Keratinocyte (primary cell): ENCODE measurements at regions of chr17 and their contacts with region 1.

Region 1: DNA sequence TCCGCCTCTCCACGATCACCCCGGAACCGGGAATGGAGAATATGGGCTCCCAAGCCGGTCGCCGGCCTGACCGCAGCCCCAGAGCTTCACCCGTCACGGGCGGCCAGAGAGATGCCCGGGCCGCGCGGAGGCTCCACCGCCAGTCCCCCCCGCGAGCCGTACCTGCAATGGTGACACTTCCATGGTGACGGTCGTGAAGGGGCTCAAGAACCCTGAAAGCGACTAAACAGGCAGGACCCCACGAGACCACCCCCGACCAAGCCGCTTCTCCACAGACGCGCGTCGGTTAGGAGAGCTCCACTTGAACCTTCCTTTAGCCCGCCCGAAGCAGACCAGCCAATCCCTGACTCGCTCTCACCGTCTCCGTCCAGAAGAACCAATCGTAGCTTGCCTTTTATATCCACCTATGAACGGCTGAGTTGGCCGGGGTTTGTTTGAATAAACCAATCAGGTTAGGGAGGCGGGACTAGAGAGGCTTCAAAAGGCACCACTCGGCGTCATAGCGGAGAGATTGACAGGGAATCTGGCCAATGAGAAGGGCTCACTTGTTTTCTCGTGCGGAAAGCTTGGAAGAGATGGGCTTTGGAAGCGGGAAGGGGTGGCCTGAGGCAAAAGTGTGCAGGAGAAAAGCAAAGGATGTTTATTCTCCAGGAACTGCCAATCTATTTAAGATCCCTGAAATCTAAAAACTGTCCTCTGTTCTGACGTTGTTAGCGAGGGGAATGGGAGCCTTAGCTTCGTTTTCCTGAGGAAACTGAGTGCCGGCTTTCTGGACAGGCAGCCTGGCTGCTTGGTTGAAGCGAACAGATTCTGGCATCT is at the start of gene TOP2A:
- DNase-seq: peak; percentile 100
- H3K4me3 ChIP-seq: peak within 1 kb of the TSS; percentile 67 to 85 (median 84)
- H3K27ac ChIP-seq: peak within 1 kb of the TSS; percentile 67
- H3K4me1 ChIP-seq: peaks cover 16% of the 10 kb centered on the region
- H3K27me3 ChIP-seq: no peaks in the 10 kb centered on the region
- CTCF ChIP-seq: no peak
- polyA plus RNA-seq, gene TOP2A: 5.2 to 45.0 TPM (median 27.1 TPM) in 3 replicates

Region 2: DNA sequence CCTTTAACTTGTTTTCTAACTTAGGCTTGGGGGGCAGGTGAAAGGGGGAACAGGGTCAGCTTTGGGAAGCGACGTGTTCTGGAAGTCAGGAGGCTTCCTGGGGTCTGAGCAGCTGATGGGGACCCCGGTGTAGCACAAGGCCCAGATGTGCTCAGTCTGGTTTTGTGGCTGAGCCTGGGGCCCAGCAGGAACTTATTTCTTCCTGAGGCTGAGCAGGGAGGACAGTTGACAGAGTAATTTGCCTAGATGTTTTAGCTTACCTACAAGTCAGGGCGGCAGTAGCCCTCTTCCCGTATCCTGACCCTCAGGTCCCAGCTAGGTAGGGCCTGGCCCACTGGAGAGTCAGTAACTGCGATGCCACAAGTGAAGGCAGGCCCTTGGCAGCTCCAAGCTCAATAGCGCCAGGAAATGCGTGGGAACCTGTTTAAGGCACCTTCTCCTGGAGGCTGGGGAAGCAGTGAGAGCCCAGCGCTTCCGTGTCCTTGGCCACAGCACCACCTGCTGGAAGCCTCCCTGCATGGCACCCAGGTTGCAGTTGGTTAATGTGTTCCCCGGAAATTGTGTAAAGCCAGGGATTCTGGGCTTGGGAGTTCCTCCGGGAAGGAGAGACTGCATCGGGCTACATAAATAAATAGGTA is 142.3 kb after region 1 on chr17:
- dilution Hi-C with region 1: loop called (anchors 10 kb)
- DNase-seq: peak; percentile 67
- H3K4me3 ChIP-seq: no peak overlapping the region
- H3K27ac ChIP-seq: peak overlapping the region; percentile 45
- H3K4me1 ChIP-seq: peaks cover 12% of the 10 kb centered on the region
- H3K27me3 ChIP-seq: peaks cover 40% of the 10 kb centered on the region
- CTCF ChIP-seq: peak; percentile 98 to 100 (median 99)